AG04449 (cell line): ENCODE measurements at regions of chr20 and their contacts with region 1.

Region 1: GRCh38 chr20:19974626-19975435 is 42.3 kb upstream of the NAA20 start:
- DNase-seq: peak; percentile 96
- H3K4me3 ChIP-seq: peak overlapping the region; percentile 90
- CTCF ChIP-seq: no peak

Region 2: DNA sequence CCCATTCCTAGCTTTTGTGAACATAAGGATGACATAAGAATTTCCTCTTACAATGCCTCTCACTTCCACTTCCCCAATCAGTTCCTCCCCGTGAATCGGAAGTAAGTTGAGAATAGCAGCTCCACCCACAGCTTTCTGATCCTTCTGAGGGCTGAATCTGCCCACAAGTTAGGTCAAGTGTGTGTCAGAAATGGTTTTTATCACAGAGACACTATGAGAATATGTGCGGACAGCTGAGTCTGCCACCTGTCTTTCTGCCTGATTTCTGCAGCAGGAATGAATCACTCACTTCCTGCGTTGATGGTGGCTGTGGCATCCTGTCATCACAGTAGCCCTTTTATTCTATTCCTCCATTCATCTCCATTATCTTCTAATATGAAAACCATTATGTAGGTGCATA is 146.6 kb before region 1 on chr20:
- CTCF ChIA-PET with region 1: interaction called, 12 read pairs
- POLR2A ChIA-PET with region 1: no interaction called
- DNase-seq: no peak
- H3K4me3 ChIP-seq: no peak overlapping the region
- CTCF ChIP-seq: peak; percentile 31

Region 3: GRCh38 chr20:19850198-19850533 is 124.7 kb before region 1 on chr20:
- CTCF ChIA-PET with region 1: no interaction called
- POLR2A ChIA-PET with region 1: no interaction called
- DNase-seq: no peak
- H3K4me3 ChIP-seq: no peak overlapping the region
- CTCF ChIP-seq: no peak

Region 4: GRCh38 chr20:19961293-19961692 is 13.5 kb before region 1 on chr20:
- CTCF ChIA-PET with region 1: interaction called, 10 read pairs
- POLR2A ChIA-PET with region 1: interaction called, 5 read pairs
- DNase-seq: no peak
- H3K4me3 ChIP-seq: no peak overlapping the region
- CTCF ChIP-seq: no peak